ENCODE measurements at regions of chr10 and their contacts with region 1.

Region 1: DNA sequence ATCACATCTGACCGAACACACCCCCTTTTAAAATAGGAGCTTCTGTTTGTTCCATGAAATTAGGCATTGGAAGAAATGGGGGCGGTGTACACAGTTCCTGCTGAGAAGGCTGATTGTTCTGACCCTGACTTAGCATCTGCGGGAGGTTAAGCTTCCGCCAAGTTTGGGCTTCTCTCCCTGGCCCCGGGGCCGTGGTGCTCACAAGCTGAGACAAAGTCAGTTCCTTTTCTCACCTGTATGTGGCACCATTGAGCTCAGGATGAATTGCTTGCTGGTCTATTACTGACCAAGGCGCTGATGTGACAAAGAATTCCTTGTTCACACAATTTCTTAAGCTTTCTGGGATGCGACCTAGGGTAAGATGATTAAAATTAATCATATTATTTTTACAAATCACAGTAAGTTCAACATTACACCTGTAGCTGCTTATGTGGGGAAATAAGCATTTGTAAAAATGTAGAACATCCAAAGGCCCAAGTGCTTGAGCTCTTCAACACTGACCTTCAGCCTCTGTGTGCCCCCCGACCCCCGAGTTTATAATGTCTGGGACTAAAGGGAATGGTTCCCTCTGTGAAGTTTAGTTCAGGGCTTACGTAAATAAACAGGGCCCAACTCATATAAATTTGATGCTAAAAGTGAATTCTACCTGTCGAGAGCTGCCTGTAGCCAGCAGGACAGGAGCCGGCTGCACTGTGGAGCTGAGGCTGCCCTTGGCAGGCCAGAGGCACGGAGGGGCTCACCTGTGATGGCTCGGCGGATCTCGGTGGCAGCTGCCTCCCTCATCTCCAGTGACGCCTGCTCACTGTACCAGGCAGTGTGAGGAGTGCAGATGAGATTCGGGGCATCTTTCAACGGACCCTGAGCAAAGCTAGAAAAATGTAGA is 50.8 kb downstream of the ZRANB1 start:
- DNase-seq: peak; percentile 83
- ATAC-seq: peak; percentile 86

Region 2: GRCh38 chr10:124886195-124886594 is 106.5 kb before region 1 on chr10:
- intact Hi-C with region 1: no loop called
- DNase-seq: peak; percentile 4
- ATAC-seq: no peak

Region 3: GRCh38 chr10:125048101-125048864 is 55.6 kb after region 1 on chr10:
- intact Hi-C with region 1: loop called (anchors 10 kb)
- DNase-seq: peak; percentile 92
- ATAC-seq: peak; percentile 93